ENCODE measurements at regions of chrX and their contacts with region 1.

Region 1: DNA sequence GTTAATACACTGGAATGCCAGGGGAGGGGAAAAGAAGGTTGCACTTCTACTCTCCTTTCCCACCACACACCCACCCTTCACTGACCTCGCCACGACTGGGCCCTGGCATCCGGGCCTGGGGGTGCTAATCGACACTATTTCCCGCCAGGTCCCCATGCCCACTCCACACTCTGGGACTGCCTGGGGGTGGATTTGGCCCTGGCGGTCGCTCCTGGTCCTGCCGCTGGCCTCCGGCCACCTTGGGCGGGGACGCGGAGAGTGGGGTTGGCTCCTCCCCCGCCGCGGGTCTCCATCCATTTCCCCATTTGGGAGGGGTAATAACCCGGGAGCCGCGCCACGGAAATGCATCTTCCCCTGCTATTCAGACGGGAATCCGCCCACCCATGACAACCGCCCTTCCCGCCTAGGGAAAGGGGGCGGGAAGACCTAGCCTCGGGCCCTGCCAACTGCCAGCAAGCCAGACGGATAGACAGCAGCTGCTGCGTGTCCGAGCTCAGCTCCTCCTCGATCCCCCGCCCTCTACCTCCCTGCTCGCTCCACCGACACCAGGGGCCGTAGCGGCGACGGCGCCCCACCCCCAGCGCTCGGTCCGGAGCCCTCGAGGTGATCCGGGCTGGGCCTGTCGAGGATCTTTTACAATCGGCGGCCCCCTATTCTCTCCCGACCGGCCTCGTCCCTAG is 78.1 kb downstream of the RLIM start:
- DNase-seq: peak; percentile 58
- H3K4me3 Mint-ChIP-seq: peak overlapping the region; percentile 66
- H3K27ac Mint-ChIP-seq: peak overlapping the region; percentile 84
- H3K4me1 Mint-ChIP-seq: peaks cover 35% of the 10 kb centered on the region
- H3K27me3 Mint-ChIP-seq: no peaks in the 10 kb centered on the region

Region 2: GRCh38 chrX:74218895-74219294 is 317.4 kb before region 1 on chrX:
- CTCF ChIA-PET with region 1: no interaction called
- POLR2A ChIA-PET with region 1: no interaction called
- intact Hi-C with region 1: loop called (anchors 5 kb)
- DNase-seq: no peak
- H3K4me3 Mint-ChIP-seq: no peak overlapping the region
- H3K27ac Mint-ChIP-seq: no peak overlapping the region
- H3K4me1 Mint-ChIP-seq: peaks cover 32% of the 10 kb centered on the region
- H3K27me3 Mint-ChIP-seq: no peaks in the 10 kb centered on the region

Region 3: GRCh38 chrX:74272230-74272629 is 264.1 kb before region 1 on chrX:
- CTCF ChIA-PET with region 1: no interaction called
- POLR2A ChIA-PET with region 1: no interaction called
- intact Hi-C with region 1: loop called (anchors 1 kb)
- DNase-seq: no peak
- H3K4me3 Mint-ChIP-seq: no peak overlapping the region
- H3K27ac Mint-ChIP-seq: no peak overlapping the region
- H3K4me1 Mint-ChIP-seq: peaks cover 17% of the 10 kb centered on the region
- H3K27me3 Mint-ChIP-seq: no peaks in the 10 kb centered on the region

Region 4: GRCh38 chrX:74450803-74451449 is 85.4 kb before region 1 on chrX:
- CTCF ChIA-PET with region 1: no interaction called
- POLR2A ChIA-PET with region 1: interaction called, 6 read pairs
- intact Hi-C with region 1: loop called (anchors 1 kb)
- DNase-seq: peak; percentile 40
- H3K4me3 Mint-ChIP-seq: no peak overlapping the region
- H3K27ac Mint-ChIP-seq: peak overlapping the region; percentile 80
- H3K4me1 Mint-ChIP-seq: peaks cover 28% of the 10 kb centered on the region
- H3K27me3 Mint-ChIP-seq: no peaks in the 10 kb centered on the region

Region 5: GRCh38 chrX:74550295-74550802 is 14.1 kb after region 1 on chrX:
- CTCF ChIA-PET with region 1: no interaction called
- POLR2A ChIA-PET with region 1: no interaction called
- intact Hi-C with region 1: loop called (anchors 1 kb)
- DNase-seq: peak; percentile 86
- H3K4me3 Mint-ChIP-seq: no peak overlapping the region
- H3K27ac Mint-ChIP-seq: no peak overlapping the region
- H3K4me1 Mint-ChIP-seq: peaks cover 3% of the 10 kb centered on the region
- H3K27me3 Mint-ChIP-seq: no peaks in the 10 kb centered on the region

Region 6: DNA sequence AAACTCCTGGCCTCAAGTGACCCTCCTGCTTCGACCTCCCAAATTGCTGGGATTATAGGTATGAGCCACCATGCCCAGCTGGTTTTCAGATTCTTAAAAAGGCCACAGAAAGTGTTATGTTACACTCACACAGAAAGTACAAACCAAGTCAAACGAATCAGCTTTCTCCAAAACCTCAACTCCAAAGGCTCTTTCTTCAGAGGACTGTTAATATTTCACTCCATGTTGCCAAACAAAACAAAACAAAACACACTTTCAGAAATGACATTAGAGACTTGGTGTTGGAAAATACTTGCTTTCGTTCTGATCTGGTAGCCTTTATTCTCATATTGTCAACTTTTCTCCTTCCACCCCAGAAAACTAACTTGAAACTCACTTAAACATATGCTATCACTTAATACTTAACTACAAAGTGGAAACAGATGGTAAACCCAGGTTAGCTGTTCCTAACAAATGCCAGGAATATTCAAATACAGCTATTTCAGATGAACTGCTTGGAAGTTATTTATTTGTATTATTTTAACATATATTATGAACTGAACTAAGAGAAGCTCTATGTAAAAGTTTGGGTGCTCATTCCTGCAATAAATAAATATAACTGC is 43.4 kb after region 1 on chrX:
- CTCF ChIA-PET with region 1: no interaction called
- POLR2A ChIA-PET with region 1: no interaction called
- intact Hi-C with region 1: loop called (anchors 2 kb)
- DNase-seq: peak; percentile 8
- H3K4me3 Mint-ChIP-seq: no peak overlapping the region
- H3K27ac Mint-ChIP-seq: peak overlapping the region; percentile 69
- H3K4me1 Mint-ChIP-seq: peaks cover 13% of the 10 kb centered on the region
- H3K27me3 Mint-ChIP-seq: no peaks in the 10 kb centered on the region

Region 7: DNA sequence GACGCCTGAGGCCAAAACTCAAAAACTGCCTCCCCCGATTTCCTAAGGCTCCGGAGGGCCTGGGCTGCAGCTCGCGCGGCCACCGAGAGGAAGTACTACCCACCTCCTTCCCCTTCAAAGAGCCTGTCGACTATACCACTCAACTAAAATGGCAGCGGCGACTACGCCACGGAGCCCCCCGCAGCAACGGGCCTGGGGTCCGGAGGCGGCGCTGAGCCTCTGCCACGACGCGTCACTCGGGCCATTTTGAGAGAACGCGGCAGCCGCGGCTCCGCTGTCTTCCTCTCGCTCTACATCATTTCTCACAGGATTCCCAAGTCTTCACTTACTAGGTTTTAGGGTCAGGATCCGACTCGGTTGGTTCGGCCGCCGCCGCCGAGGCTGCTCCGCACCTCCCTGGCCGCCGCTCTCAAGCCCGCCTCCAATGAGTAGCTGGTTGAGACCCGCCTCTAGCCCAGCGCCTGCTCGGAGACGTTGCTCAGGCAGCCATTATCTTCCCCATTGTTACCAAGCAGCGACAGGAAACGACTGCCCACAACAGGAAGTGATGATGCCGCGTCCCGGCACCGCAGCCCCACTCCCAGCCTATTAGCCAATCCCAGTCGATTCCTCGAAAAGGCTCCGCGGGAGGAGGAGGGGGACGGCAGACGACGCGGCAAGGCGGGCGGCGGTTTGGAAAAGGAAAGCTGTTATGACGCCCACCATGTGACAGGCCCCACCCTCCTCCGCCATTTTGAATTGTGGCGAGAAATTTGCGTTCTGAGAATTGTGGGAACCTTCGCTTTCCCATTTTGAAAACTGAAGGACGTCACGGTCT is 78.0 kb after region 1 on chrX and contains the start of gene RLIM:
- CTCF ChIA-PET with region 1: no interaction called
- POLR2A ChIA-PET with region 1: interaction called, 4 read pairs
- intact Hi-C with region 1: loop called (anchors 1 kb)
- DNase-seq: peak; percentile 95
- H3K4me3 Mint-ChIP-seq: peak within 1 kb of the TSS; percentile 98
- H3K27ac Mint-ChIP-seq: peak within 1 kb of the TSS; percentile 99
- H3K4me1 Mint-ChIP-seq: peaks cover 12% of the 10 kb centered on the region
- H3K27me3 Mint-ChIP-seq: no peaks in the 10 kb centered on the region
- total RNA-seq, gene RLIM: 36.6 to 37.5 TPM

Region 8: GRCh38 chrX:75096331-75096730 is 560.0 kb after region 1 on chrX:
- CTCF ChIA-PET with region 1: no interaction called
- POLR2A ChIA-PET with region 1: no interaction called
- intact Hi-C with region 1: no loop called
- DNase-seq: no peak
- H3K4me3 Mint-ChIP-seq: no peak overlapping the region
- H3K27ac Mint-ChIP-seq: no peak overlapping the region
- H3K4me1 Mint-ChIP-seq: peaks cover 16% of the 10 kb centered on the region
- H3K27me3 Mint-ChIP-seq: no peaks in the 10 kb centered on the region

Measured in activated CD4-positive, alpha-beta memory T cell treated with anti-CD3 and anti-CD28 coated beads for 36 hours (primary cell).